ENCODE measurements at regions of chr2 and their contacts with region 1.

Region 1: DNA sequence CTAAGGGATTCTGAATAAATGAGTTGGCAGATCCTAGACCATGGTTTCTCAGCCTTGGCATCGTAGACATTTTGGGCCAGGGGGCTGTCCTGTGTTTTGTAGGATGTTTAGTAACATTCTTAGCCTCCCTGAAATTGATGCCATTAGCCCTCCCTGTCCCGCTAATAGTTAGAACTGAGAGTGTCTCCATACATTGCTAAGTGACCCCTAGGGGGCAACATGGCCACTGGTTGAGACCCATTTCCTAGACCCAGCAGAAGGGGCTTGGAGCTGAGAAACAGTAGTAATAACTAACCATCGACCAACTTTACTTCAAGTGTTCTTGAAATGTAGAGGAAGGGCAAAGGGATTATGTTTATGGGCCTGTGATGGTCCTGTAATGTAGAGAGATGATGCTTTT is 40.8 kb downstream of the KCMF1 start:
- DNase-seq: no peak
- H3K4me3 ChIP-seq: no peak overlapping the region
- H3K27ac ChIP-seq: no peak overlapping the region
- H3K4me1 ChIP-seq: no peaks in the 10 kb centered on the region
- H3K27me3 ChIP-seq: no peaks in the 10 kb centered on the region
- CTCF ChIP-seq: no peak

Region 2: GRCh38 chr2:84925724-84926376 is 85.9 kb before region 1 on chr2:
- intact Hi-C with region 1: loop called (anchors 5 kb)
- DNase-seq: peak; percentile 100
- H3K4me3 ChIP-seq: peak overlapping the region; percentile 29
- H3K27ac ChIP-seq: peak overlapping the region; percentile 46
- H3K4me1 ChIP-seq: no peaks in the 10 kb centered on the region
- H3K27me3 ChIP-seq: no peaks in the 10 kb centered on the region
- CTCF ChIP-seq: peak; percentile 99

Region 3: GRCh38 chr2:85132834-85133637 is 121.3 kb after region 1 on chr2 and contains the start of gene TCF7L1:
- intact Hi-C with region 1: no loop called
- DNase-seq: peak; percentile 65
- H3K4me3 ChIP-seq: peak within 1 kb of the TSS; percentile 46
- H3K27ac ChIP-seq: no peak within 1 kb of the TSS
- H3K4me1 ChIP-seq: no peaks in the 10 kb centered on the region
- H3K27me3 ChIP-seq: peaks cover 22% of the 10 kb centered on the region
- CTCF ChIP-seq: peak; percentile 47
- total RNA-seq, gene TCF7L1: 0.99 to 3.2 TPM

Region 4: DNA sequence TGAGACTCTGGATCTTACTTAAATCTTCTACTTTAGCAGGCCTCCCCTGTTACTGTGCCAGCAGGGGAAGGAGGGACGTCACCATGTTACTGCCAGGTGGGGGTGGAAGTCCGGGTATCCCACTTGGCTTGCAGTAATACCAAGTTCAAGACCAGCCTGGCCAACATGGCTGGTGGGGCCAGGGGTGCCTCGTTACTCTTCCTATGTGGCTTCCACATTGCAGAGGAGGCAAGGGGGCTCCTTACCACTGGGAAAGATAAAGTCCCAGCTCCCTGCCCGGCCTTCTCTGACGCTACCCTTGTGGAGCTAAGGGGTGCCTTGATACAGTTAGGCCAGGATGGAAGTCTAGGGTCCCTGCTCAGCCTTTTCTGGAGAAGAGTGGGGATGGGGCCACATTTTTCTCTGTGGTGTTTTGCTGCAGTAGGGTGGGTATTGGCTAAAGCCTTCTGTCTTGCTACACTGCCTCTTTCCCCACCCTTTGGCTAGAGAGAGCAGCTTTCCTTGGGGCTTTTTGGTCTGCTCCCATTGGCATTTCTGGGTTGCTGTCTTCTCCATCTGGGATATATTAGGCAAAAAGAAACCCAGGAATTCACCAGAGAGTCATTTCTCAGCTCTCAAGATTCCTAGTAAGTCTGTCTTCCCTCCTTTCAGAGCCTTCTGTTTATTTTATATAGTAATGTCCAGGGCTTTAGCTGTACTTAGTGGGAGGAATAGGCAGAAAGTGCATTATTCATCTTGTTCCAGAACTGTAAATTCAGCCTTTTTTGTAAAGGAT is 364.7 kb after region 1 on chr2:
- intact Hi-C with region 1: no loop called
- DNase-seq: no peak
- H3K4me3 ChIP-seq: no peak overlapping the region
- H3K27ac ChIP-seq: no peak overlapping the region
- H3K4me1 ChIP-seq: no peaks in the 10 kb centered on the region
- H3K27me3 ChIP-seq: no peaks in the 10 kb centered on the region
- CTCF ChIP-seq: no peak